Calu3 (cell line): ENCODE measurements at regions of chr13 and their contacts with region 1.

Region 1: GRCh38 chr13:91017031-91017668 is 330.3 kb upstream of the MIR17HG start:
- DNase-seq: peak; percentile 48
- H3K4me3 Mint-ChIP-seq: no peak overlapping the region
- H3K27ac Mint-ChIP-seq: no peak overlapping the region
- H3K4me1 Mint-ChIP-seq: no peaks in the 10 kb centered on the region
- H3K27me3 Mint-ChIP-seq: no peaks in the 10 kb centered on the region
- CTCF ChIP-seq: no peak

Region 2: GRCh38 chr13:90889906-90890834 is 127.0 kb before region 1 on chr13:
- CTCF ChIA-PET with region 1: no interaction called
- intact Hi-C with region 1: loop called (anchors 5 kb)
- DNase-seq: no peak
- H3K4me3 Mint-ChIP-seq: no peak overlapping the region
- H3K27ac Mint-ChIP-seq: no peak overlapping the region
- H3K4me1 Mint-ChIP-seq: no peaks in the 10 kb centered on the region
- H3K27me3 Mint-ChIP-seq: no peaks in the 10 kb centered on the region
- CTCF ChIP-seq: no peak